ENCODE measurements at regions of chr3 and their contacts with region 1.

Region 1: GRCh38 chr3:73037369-73037699 is 24.1 kb upstream of the EBLN2 start:
- DNase-seq: no peak
- ATAC-seq: no peak
- H3K4me3 ChIP-seq: no peak overlapping the region
- H3K4me3 Mint-ChIP-seq: no peak overlapping the region
- H3K27ac ChIP-seq: no peak overlapping the region
- H3K27ac Mint-ChIP-seq: peak overlapping the region; percentile 94
- H3K4me1 ChIP-seq: peaks cover 19% of the 10 kb centered on the region
- H3K4me1 Mint-ChIP-seq: peaks cover 85% of the 10 kb centered on the region
- H3K27me3 ChIP-seq: no peaks in the 10 kb centered on the region
- H3K27me3 Mint-ChIP-seq: no peaks in the 10 kb centered on the region
- CTCF ChIP-seq: no peak

Region 2: GRCh38 chr3:73004316-73004715 is 33.0 kb before region 1 on chr3:
- CTCF ChIA-PET with region 1: no interaction called
- POLR2A ChIA-PET with region 1: no interaction called
- intact Hi-C with region 1: loop called in 1 of 2 experiments (anchors 2 kb)
- DNase-seq: no peak
- ATAC-seq: no peak
- H3K4me3 ChIP-seq: no peak overlapping the region
- H3K4me3 Mint-ChIP-seq: no peak overlapping the region
- H3K27ac ChIP-seq: no peak overlapping the region
- H3K27ac Mint-ChIP-seq: peak overlapping the region; percentile 69
- H3K4me1 ChIP-seq: peaks cover 50% of the 10 kb centered on the region
- H3K4me1 Mint-ChIP-seq: peaks cover 83% of the 10 kb centered on the region
- H3K27me3 ChIP-seq: no peaks in the 10 kb centered on the region
- H3K27me3 Mint-ChIP-seq: no peaks in the 10 kb centered on the region
- CTCF ChIP-seq: no peak